Activated B cell treated with CpG ODN at 0.5 μM for 24 hours (primary cell): ENCODE measurements at regions of chr20 and their contacts with region 1.

Region 1: GRCh38 chr20:50929299-50930138 is 1.7 kb downstream of the ADNP start:
- DNase-seq: peak; percentile 74
- ATAC-seq: peak; percentile 66
- H3K4me3 Mint-ChIP-seq: peak overlapping the region; percentile 85
- H3K27ac Mint-ChIP-seq: peak overlapping the region; percentile 92
- H3K4me1 Mint-ChIP-seq: peaks cover 52% of the 10 kb centered on the region
- H3K27me3 Mint-ChIP-seq: no peaks in the 10 kb centered on the region
- CTCF ChIP-seq: no peak

Region 2: DNA sequence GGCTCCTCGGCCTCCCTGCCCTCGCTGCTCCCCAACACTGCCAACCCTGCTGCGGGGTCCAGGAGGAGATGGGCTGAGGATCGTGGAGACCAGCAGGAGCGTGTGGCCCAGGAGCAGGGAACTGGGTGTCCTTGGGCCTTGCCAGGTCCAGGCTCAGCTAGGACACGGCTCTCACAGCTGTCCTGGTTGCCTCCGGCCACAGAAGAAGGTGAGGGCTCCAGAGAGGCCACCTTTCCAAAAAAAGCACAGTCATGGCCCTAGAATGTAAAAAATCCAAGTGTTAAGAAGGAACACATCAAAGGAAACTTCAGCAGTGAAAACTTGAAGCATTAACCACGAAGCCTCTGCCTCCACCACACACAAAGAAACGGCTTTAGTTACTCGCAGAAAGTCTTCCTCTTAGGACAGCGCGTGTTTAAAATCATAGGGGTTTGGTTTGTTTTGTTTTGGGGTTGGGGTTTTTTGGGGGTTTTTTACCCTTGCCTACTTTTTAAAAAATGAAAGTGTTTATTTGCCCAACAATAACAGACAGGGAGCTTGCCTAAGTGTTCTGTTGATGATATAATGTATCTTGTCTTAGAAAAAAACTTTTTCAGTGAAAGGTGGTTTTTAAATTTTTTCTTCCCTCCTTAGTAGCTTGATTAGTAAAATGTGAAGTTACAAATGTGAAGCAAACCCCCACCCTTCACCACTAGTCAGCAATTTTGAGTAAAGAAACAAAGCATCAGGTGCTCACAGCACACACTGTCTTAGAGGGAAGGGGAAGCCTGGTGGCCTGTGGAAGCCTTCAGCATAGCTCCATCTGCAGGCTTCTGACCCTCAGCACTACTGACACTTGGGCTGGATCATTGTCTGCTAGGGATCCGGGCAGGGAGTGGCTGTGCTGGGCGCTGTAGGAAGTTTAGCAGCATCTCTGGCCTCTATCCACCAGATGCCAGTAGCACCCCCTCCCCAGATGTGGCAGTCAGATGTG is 359.4 kb before region 1 on chr20:
- CTCF ChIA-PET with region 1: no interaction called
- POLR2A ChIA-PET with region 1: no interaction called
- intact Hi-C with region 1: no loop called
- DNase-seq: peak; percentile 20
- ATAC-seq: peak; percentile 90
- H3K4me3 Mint-ChIP-seq: peak overlapping the region; percentile 46
- H3K27ac Mint-ChIP-seq: peak overlapping the region; percentile 87
- H3K4me1 Mint-ChIP-seq: peaks cover 70% of the 10 kb centered on the region
- H3K27me3 Mint-ChIP-seq: no peaks in the 10 kb centered on the region
- CTCF ChIP-seq: no peak

Region 3: DNA sequence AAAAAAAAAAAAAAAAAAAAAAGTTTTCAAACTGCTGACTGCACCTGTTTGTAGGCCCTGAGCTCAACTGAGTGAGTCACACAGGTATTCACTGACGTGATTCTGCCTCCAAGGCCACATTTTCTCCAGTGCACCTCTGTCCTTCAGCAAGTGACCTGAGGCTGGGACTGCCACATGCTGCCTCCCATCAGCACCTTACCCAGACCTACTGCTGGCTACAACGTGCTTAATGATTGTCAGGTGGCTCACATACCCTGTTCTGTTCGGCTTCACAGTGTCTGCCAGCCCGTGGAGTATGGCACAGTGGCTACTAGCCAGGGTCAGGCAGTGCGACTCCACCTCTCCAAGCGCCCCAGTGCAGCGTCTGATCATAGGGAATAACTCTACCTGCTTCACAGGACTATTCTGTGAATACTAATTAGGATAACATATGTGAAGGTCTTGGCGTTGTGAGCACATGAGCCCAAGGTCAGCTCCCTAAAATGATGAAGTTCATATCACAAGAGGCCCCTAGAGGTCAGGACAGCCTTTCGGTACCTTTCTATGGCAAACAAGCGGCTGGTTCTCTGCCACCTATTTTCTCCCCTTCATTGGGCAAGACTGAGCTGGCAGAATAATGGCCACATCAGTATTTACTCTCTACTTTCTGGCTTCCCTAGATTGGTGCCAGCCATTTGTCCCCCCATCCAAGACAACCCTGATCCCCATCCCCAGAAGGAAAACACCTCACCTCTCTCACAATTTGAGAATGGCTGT is 266.2 kb before region 1 on chr20:
- CTCF ChIA-PET with region 1: no interaction called
- POLR2A ChIA-PET with region 1: no interaction called
- intact Hi-C with region 1: no loop called
- DNase-seq: no peak
- ATAC-seq: no peak
- H3K4me3 Mint-ChIP-seq: no peak overlapping the region
- H3K27ac Mint-ChIP-seq: no peak overlapping the region
- H3K4me1 Mint-ChIP-seq: no peaks in the 10 kb centered on the region
- H3K27me3 Mint-ChIP-seq: peaks cover 9% of the 10 kb centered on the region
- CTCF ChIP-seq: no peak

Region 4: GRCh38 chr20:50799890-50800655 is 129.4 kb before region 1 on chr20:
- CTCF ChIA-PET with region 1: interaction called, 231 read pairs
- POLR2A ChIA-PET with region 1: interaction called, 364 read pairs
- intact Hi-C with region 1: no loop called
- DNase-seq: no peak
- ATAC-seq: peak; percentile 47
- H3K4me3 Mint-ChIP-seq: peak overlapping the region; percentile 71
- H3K27ac Mint-ChIP-seq: peak overlapping the region; percentile 96
- H3K4me1 Mint-ChIP-seq: peaks cover 71% of the 10 kb centered on the region
- H3K27me3 Mint-ChIP-seq: no peaks in the 10 kb centered on the region
- CTCF ChIP-seq: no peak

Region 5: GRCh38 chr20:50824193-50824632 is 105.3 kb before region 1 on chr20:
- CTCF ChIA-PET with region 1: interaction called, 22 read pairs
- POLR2A ChIA-PET with region 1: interaction called, 120 read pairs
- intact Hi-C with region 1: no loop called
- DNase-seq: no peak
- ATAC-seq: no peak
- H3K4me3 Mint-ChIP-seq: no peak overlapping the region
- H3K27ac Mint-ChIP-seq: peak overlapping the region; percentile 71
- H3K4me1 Mint-ChIP-seq: peaks cover 55% of the 10 kb centered on the region
- H3K27me3 Mint-ChIP-seq: no peaks in the 10 kb centered on the region
- CTCF ChIP-seq: no peak

Region 6: GRCh38 chr20:50913690-50914375 is 15.7 kb before region 1 on chr20:
- CTCF ChIA-PET with region 1: interaction called, 15 read pairs
- POLR2A ChIA-PET with region 1: interaction called, 16 read pairs
- intact Hi-C with region 1: loop called (anchors 1 kb)
- DNase-seq: no peak
- ATAC-seq: no peak
- H3K4me3 Mint-ChIP-seq: no peak overlapping the region
- H3K27ac Mint-ChIP-seq: peak overlapping the region; percentile 30
- H3K4me1 Mint-ChIP-seq: peaks cover 82% of the 10 kb centered on the region
- H3K27me3 Mint-ChIP-seq: no peaks in the 10 kb centered on the region
- CTCF ChIP-seq: no peak

Region 7: GRCh38 chr20:50992733-50993457 is 63.4 kb after region 1 on chr20:
- CTCF ChIA-PET with region 1: no interaction called
- POLR2A ChIA-PET with region 1: no interaction called
- intact Hi-C with region 1: no loop called
- DNase-seq: no peak
- ATAC-seq: peak; percentile 58
- H3K4me3 Mint-ChIP-seq: no peak overlapping the region
- H3K27ac Mint-ChIP-seq: no peak overlapping the region
- H3K4me1 Mint-ChIP-seq: peaks cover 15% of the 10 kb centered on the region
- H3K27me3 Mint-ChIP-seq: peaks cover 4% of the 10 kb centered on the region
- CTCF ChIP-seq: no peak

Region 8: GRCh38 chr20:51172974-51173397 is 243.5 kb after region 1 on chr20:
- CTCF ChIA-PET with region 1: no interaction called
- POLR2A ChIA-PET with region 1: no interaction called
- intact Hi-C with region 1: no loop called
- DNase-seq: no peak
- ATAC-seq: no peak
- H3K4me3 Mint-ChIP-seq: no peak overlapping the region
- H3K27ac Mint-ChIP-seq: no peak overlapping the region
- H3K4me1 Mint-ChIP-seq: no peaks in the 10 kb centered on the region
- H3K27me3 Mint-ChIP-seq: peaks cover 27% of the 10 kb centered on the region
- CTCF ChIP-seq: no peak

Region 9: GRCh38 chr20:51318058-51318895 is 388.8 kb after region 1 on chr20:
- CTCF ChIA-PET with region 1: no interaction called
- POLR2A ChIA-PET with region 1: interaction called, 10 read pairs
- intact Hi-C with region 1: no loop called
- DNase-seq: peak; percentile 21
- ATAC-seq: peak; percentile 25
- H3K4me3 Mint-ChIP-seq: no peak overlapping the region
- H3K27ac Mint-ChIP-seq: no peak overlapping the region
- H3K4me1 Mint-ChIP-seq: no peaks in the 10 kb centered on the region
- H3K27me3 Mint-ChIP-seq: peaks cover 5% of the 10 kb centered on the region
- CTCF ChIP-seq: no peak